Mammary epithelial cell (primary cell): ENCODE measurements at regions of chr6 and their contacts with region 1.

Region 1: GRCh38 chr6:52297433-52297832 is 12.9 kb upstream of the MCM3 start:
- DNase-seq: no peak
- H3K4me3 ChIP-seq: no peak overlapping the region
- H3K27ac ChIP-seq: no peak overlapping the region
- H3K4me1 ChIP-seq: no peaks in the 10 kb centered on the region
- H3K27me3 ChIP-seq: no peaks in the 10 kb centered on the region
- CTCF ChIP-seq: no peak

Region 2: DNA sequence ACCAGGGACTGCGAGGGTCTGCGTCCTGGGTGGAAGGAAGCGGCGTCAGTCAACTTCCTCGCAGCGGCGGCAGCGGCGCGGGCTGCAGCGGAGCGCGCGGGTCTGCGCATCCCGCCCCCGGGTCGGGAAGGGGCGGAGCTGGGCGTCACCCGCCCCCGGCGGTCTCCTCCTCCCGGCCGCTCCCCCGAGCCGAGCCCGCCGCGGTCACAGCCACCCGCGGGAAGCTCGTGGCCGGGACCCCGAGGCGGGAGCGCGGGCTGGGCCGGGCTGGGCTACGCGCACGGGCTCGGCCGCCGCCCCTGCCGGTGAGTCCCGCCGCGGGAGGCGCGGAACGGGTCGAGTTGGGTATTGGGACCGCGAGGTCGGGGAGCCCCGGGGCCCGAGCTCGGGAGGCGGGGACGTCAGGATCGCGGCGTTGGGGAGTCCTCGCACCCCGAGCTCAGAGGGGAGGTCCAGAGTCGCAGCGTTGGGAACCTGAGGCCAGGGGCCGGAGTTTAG is 64.6 kb after region 1 on chr6 and contains the start of gene PAQR8:
- CTCF ChIA-PET with region 1: no interaction called
- dilution Hi-C with region 1: loop called (anchors 5 kb)
- in situ Hi-C with region 1: no loop called
- intact Hi-C with region 1: no loop called
- DNase-seq: peak; percentile 36
- H3K4me3 ChIP-seq: peak within 1 kb of the TSS; percentile 59 to 72 (median 68)
- H3K27ac ChIP-seq: no peak within 1 kb of the TSS
- H3K4me1 ChIP-seq: peaks cover 14% of the 10 kb centered on the region
- H3K27me3 ChIP-seq: no peaks in the 10 kb centered on the region
- CTCF ChIP-seq: no peak
- total RNA-seq, gene PAQR8: 0.17 to 3.4 TPM

Region 3: GRCh38 chr6:52389626-52390360 is 92.4 kb after region 1 on chr6:
- CTCF ChIA-PET with region 1: no interaction called
- dilution Hi-C with region 1: no loop called
- in situ Hi-C with region 1: loop called in 1 of 2 experiments (anchors 5 kb)
- intact Hi-C with region 1: no loop called
- DNase-seq: peak; percentile 72
- H3K4me3 ChIP-seq: no peak overlapping the region
- H3K27ac ChIP-seq: peak overlapping the region; percentile 26
- H3K4me1 ChIP-seq: peaks cover 14% of the 10 kb centered on the region
- H3K27me3 ChIP-seq: no peaks in the 10 kb centered on the region
- CTCF ChIP-seq: no peak